ENCODE measurements at regions of chr4 and their contacts with region 1.

Region 1: DNA sequence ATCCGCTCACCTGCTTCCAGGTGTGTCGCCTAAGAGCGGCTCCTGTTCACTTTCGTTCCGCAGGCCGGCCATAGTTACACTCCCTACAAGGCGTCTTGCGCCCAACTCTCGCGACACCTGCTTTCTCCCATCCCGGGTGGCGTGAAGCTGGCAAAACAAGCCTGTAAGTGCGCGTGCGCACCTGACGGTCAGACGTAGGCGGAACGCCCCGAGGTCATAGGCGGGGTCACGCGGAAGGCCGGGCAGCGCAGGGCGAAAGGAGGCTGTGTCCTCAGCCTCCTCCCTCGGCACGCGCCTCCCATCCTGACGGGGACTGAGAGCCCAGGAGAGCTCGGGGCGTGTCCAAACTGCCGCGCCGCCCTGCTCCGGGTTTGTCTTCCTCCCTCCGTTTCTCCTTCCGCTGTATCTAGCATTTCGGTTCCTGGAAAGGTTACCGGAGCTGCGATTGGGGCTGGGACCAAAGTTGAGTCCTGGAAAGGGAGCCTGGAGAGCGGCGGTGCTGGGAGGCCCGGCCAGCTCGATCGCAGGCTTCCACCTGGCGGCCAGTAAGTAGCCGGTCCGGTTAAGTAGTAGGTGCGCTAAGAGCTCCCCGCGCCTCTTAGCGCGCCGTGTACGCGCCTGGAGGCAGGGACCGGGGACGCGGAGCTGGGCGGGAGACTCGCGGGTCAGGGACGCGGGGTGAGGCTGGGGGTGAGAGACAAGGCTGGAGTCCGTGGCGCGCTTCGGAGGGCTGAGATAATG is at the starts of genes ABHD18 and MFSD8:
- H3K4me3 ChIP-seq: peak within 1 kb of the TSS; percentile 69
- H3K27ac ChIP-seq: peak within 1 kb of the TSS; percentile 61
- H3K4me1 ChIP-seq: no peaks in the 10 kb centered on the region
- CTCF ChIP-seq: peak; percentile 78

Region 2: GRCh38 chr4:127880764-127881562 is 84.3 kb before region 1 on chr4 and contains the start of gene PLK4:
- CTCF ChIA-PET with region 1: no interaction called
- POLR2A ChIA-PET with region 1: interaction called, 27 read pairs
- H3K4me3 ChIP-seq: peak within 1 kb of the TSS; percentile 96
- H3K27ac ChIP-seq: peak within 1 kb of the TSS; percentile 96
- H3K4me1 ChIP-seq: no peaks in the 10 kb centered on the region; the same call in 1 of the 2 replicates
- CTCF ChIP-seq: 0 out of 2 replicates have a peak, but pooled peaks have one; percentile 4

Region 3: DNA sequence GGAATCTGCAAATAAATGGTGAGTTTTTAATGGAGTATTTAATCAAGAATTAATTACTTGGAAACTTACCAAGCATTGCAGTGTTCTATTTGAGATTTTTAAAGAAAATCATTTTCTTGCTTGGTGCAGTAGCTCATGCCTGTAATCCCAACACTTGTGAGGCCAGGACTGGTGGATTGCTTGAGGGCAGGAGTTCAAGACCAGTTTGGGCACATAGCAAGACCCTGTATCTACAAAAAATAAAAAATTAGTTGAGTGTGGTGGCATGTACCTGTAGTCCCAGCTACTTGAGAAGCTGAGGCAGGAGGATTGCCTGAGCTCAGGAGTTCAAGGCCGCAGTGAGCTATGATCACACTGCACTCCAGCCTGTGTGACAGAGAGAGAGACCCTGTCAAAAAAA is 77.8 kb before region 1 on chr4:
- CTCF ChIA-PET with region 1: no interaction called
- POLR2A ChIA-PET with region 1: interaction called, 12 read pairs
- H3K4me3 ChIP-seq: no peak overlapping the region
- H3K27ac ChIP-seq: no peak overlapping the region
- H3K4me1 ChIP-seq: no peaks in the 10 kb centered on the region
- CTCF ChIP-seq: no peak

Region 4: GRCh38 chr4:128060699-128061565 is 95.7 kb after region 1 on chr4 and contains the start of gene LARP1B:
- CTCF ChIA-PET with region 1: no interaction called
- POLR2A ChIA-PET with region 1: interaction called, 32 read pairs
- H3K4me3 ChIP-seq: peak within 1 kb of the TSS; percentile 77
- H3K27ac ChIP-seq: peak within 1 kb of the TSS; percentile 92
- H3K4me1 ChIP-seq: no peaks in the 10 kb centered on the region
- CTCF ChIP-seq: no peak

Region 5: GRCh38 chr4:128123036-128123435 is 157.8 kb after region 1 on chr4:
- CTCF ChIA-PET with region 1: no interaction called
- POLR2A ChIA-PET with region 1: no interaction called
- H3K4me3 ChIP-seq: no peak overlapping the region
- H3K27ac ChIP-seq: no peak overlapping the region
- H3K4me1 ChIP-seq: no peaks in the 10 kb centered on the region
- CTCF ChIP-seq: no peak